ENCODE measurements at regions of chr6 and their contacts with region 1.

Region 1: GRCh38 chr6:132300323-132300949 is 100.8 kb downstream of the MOXD1 start:
- DNase-seq: peak; percentile 46
- ATAC-seq: peak; percentile 79
- H3K4me3 Mint-ChIP-seq: no peak overlapping the region
- H3K27ac Mint-ChIP-seq: no peak overlapping the region
- H3K4me1 Mint-ChIP-seq: no peaks in the 10 kb centered on the region
- H3K27me3 Mint-ChIP-seq: peaks cover 11% of the 10 kb centered on the region

Region 2: DNA sequence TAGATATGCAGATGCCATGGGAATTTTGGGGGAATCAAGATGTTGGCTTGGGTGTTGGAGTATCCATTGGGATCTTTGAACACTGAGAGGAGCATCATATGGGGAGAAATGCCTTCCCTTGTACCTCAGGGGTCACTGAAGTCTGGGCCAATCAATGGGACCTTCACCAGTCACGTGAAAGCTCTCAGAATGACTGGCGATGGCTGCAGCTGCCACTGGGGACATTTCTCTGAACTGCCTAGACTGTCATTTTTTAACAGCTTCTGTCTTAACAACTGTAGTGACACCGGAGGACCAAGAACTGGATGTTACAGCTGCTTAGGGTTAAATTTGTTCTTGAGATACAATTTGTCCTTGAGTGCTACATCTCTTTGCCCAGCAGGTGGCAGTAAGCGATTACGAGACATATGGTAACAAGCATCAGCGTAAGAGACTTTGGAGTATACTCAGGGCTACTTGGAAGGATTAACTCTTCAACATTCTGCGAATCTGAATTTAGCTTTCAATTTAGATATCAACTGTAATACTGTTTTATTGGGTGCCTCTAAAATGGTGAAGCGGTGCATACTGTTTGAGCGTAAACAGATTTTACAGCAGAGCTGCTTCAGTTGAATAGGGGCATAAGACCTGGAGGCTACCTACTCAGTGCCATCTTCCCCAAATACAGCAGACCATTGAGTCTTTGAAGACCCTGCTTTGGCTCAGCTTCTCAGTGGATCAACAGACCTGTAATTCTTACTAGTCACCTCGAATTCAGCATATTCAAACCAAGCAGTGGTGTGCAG is 385.3 kb before region 1 on chr6:
- CTCF ChIA-PET with region 1: interaction called, 9 read pairs
- POLR2A ChIA-PET with region 1: no interaction called
- intact Hi-C with region 1: loop called in 1 of 2 experiments (anchors 2 kb)
- DNase-seq: peak; percentile 72
- ATAC-seq: peak; percentile 76
- H3K4me3 Mint-ChIP-seq: no peak overlapping the region
- H3K27ac Mint-ChIP-seq: no peak overlapping the region
- H3K4me1 Mint-ChIP-seq: peaks cover 9% of the 10 kb centered on the region
- H3K27me3 Mint-ChIP-seq: peaks cover 32% of the 10 kb centered on the region

Region 3: GRCh38 chr6:132025468-132025867 is 275.0 kb before region 1 on chr6:
- CTCF ChIA-PET with region 1: no interaction called
- POLR2A ChIA-PET with region 1: no interaction called
- intact Hi-C with region 1: no loop called
- DNase-seq: no peak
- ATAC-seq: no peak
- H3K4me3 Mint-ChIP-seq: no peak overlapping the region
- H3K27ac Mint-ChIP-seq: no peak overlapping the region
- H3K4me1 Mint-ChIP-seq: no peaks in the 10 kb centered on the region
- H3K27me3 Mint-ChIP-seq: peaks cover 2% of the 10 kb centered on the region

Region 4: DNA sequence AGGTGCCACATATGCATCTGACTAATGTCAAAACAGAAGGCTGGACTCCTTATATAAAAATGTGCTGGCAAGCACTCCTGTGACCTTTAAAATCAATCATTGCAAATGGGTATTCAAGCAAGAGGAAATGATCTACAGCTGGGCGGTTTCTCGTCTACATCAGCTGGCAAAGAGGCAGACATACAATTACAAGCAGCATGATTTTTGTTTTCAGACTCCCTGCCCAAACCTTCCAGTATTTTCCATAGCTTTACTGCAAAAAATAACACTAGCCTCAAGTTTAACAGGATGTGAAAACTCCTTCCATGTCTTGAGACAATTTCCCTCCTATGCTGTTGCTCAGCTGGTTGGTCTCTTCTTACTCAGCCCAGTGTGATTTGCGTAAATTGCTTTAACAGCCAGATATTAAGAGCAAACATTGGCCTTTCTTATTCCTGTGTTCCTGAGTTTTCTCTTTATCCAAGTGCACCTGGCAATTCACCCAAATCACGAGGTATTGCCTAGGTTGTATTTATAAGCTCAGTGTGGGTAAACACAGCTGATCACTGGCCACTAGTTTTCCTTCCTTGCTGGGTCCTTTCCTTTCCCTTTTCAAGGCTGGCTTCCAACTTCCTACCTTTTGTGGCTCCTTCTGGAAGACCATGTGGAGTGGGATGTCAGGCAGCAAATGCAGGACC is 29.6 kb before region 1 on chr6:
- CTCF ChIA-PET with region 1: interaction called, 11 read pairs
- POLR2A ChIA-PET with region 1: no interaction called
- intact Hi-C with region 1: no loop called
- DNase-seq: no peak
- ATAC-seq: no peak
- H3K4me3 Mint-ChIP-seq: no peak overlapping the region
- H3K27ac Mint-ChIP-seq: no peak overlapping the region
- H3K4me1 Mint-ChIP-seq: no peaks in the 10 kb centered on the region
- H3K27me3 Mint-ChIP-seq: peaks cover 6% of the 10 kb centered on the region

Region 5: GRCh38 chr6:132289756-132290155 is 10.7 kb before region 1 on chr6:
- CTCF ChIA-PET with region 1: interaction called, 17 read pairs
- POLR2A ChIA-PET with region 1: no interaction called
- intact Hi-C with region 1: no loop called
- DNase-seq: no peak
- ATAC-seq: no peak
- H3K4me3 Mint-ChIP-seq: no peak overlapping the region
- H3K27ac Mint-ChIP-seq: no peak overlapping the region
- H3K4me1 Mint-ChIP-seq: no peaks in the 10 kb centered on the region
- H3K27me3 Mint-ChIP-seq: peaks cover 2% of the 10 kb centered on the region

Region 6: GRCh38 chr6:132341646-132342045 is 41.2 kb after region 1 on chr6:
- CTCF ChIA-PET with region 1: no interaction called
- POLR2A ChIA-PET with region 1: no interaction called
- intact Hi-C with region 1: no loop called
- DNase-seq: no peak
- ATAC-seq: no peak
- H3K4me3 Mint-ChIP-seq: no peak overlapping the region
- H3K27ac Mint-ChIP-seq: no peak overlapping the region
- H3K4me1 Mint-ChIP-seq: no peaks in the 10 kb centered on the region
- H3K27me3 Mint-ChIP-seq: no peaks in the 10 kb centered on the region

Region 7: GRCh38 chr6:132391391-132392271 is 91.2 kb after region 1 on chr6:
- CTCF ChIA-PET with region 1: interaction called, 3 read pairs
- POLR2A ChIA-PET with region 1: no interaction called
- intact Hi-C with region 1: loop called in 1 of 2 experiments (anchors 5 kb)
- DNase-seq: no peak
- ATAC-seq: no peak
- H3K4me3 Mint-ChIP-seq: no peak overlapping the region
- H3K27ac Mint-ChIP-seq: no peak overlapping the region
- H3K4me1 Mint-ChIP-seq: no peaks in the 10 kb centered on the region
- H3K27me3 Mint-ChIP-seq: peaks cover 30% of the 10 kb centered on the region

Measured in activated CD4-positive, alpha-beta T cell treated with anti-CD3 and anti-CD28 coated beads for 36 hours (primary cell).